GM13976 (cell line): ENCODE measurements at regions of chr19 and their contacts with region 1.

Region 1: GRCh38 chr19:8269724-8270123 is 38.4 kb downstream of the CD320 start:
- DNase-seq: no peak
- CTCF ChIP-seq: no peak

Region 2: GRCh38 chr19:8307965-8308866 is 38.5 kb after region 1 on chr19 and contains the start of gene CD320:
- in situ Hi-C with region 1: loop called (anchors 5 kb)
- DNase-seq: peak; percentile 95
- CTCF ChIP-seq: no peak

Region 3: GRCh38 chr19:8544168-8544567 is 274.4 kb after region 1 on chr19:
- in situ Hi-C with region 1: no loop called
- DNase-seq: no peak
- CTCF ChIP-seq: no peak